ENCODE measurements at regions of chr11 and their contacts with region 1.

Region 1: GRCh38 chr11:120511116-120511819 is at the start of gene GRIK4:
- DNase-seq: peak; percentile 69 to 82 (median 81)
- H3K4me3 ChIP-seq: peak within 1 kb of the TSS in 5 of 7 experiments; percentile 34 to 64 (median 44)
- H3K27ac ChIP-seq: no peak within 1 kb of the TSS
- H3K4me1 ChIP-seq: peaks cover 0 to 2% (median 1%) of the 10 kb centered on the region in 4 experiments
- H3K27me3 ChIP-seq: peaks cover 11 to 77% (median 32%) of the 10 kb centered on the region in 5 experiments

Region 2: GRCh38 chr11:120210626-120211521 is 300.4 kb before region 1 on chr11 and contains the start of gene OAF:
- CTCF ChIA-PET with region 1: no interaction called
- POLR2A ChIA-PET with region 1: no interaction called
- DNase-seq: peak; percentile 85 to 95 (median 94)
- H3K4me3 ChIP-seq: peak within 1 kb of the TSS; percentile 48 to 90 (median 85)
- H3K27ac ChIP-seq: peak within 1 kb of the TSS in 1 of 2 experiments; percentile 58
- H3K4me1 ChIP-seq: peaks cover 4 to 49% (median 37%) of the 10 kb centered on the region in 4 experiments
- H3K27me3 ChIP-seq: no peaks in the 10 kb centered on the region

Region 3: DNA sequence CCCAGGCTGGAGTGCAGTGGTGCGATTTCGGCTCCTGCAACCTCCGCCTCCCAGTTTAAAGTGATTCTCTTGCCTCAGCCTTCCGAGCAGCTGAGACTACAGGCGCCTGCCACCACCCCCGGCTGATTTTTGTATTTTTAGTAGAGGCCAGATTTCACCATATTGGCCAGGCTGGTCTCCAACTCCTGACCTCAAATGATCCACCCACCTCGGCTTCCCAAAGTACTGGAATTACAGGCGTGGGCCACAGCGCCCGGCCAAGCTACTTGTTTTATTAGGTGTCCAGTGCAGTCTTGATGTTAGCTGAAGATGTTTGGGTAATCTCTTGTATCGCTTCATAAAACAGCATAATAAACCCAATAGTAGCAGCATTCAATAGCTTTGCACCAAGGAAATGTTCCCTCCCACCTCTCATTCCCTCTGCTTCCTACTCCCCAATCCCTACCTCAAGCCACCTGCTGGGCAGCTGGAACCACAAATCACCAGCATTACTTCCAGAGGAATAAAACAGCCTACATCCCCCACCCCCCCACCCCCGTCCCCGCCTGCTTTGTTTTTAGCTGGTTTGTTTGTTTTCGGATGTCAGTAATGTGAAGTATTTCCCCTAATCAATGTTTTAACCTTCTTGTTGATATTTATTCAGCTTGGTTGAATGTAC is 10.7 kb before region 1 on chr11:
- CTCF ChIA-PET with region 1: interaction called, 16 read pairs
- POLR2A ChIA-PET with region 1: no interaction called
- DNase-seq: no peak
- H3K4me3 ChIP-seq: no peak overlapping the region
- H3K27ac ChIP-seq: no peak overlapping the region
- H3K4me1 ChIP-seq: no peaks in the 10 kb centered on the region
- H3K27me3 ChIP-seq: peaks cover 11 to 59% (median 18%) of the 10 kb centered on the region in 5 experiments

Region 4: GRCh38 chr11:120682866-120683265 is 171.6 kb after region 1 on chr11:
- CTCF ChIA-PET with region 1: interaction called, 12 read pairs
- POLR2A ChIA-PET with region 1: no interaction called
- DNase-seq: no peak
- H3K4me3 ChIP-seq: no peak overlapping the region
- H3K27ac ChIP-seq: no peak overlapping the region
- H3K4me1 ChIP-seq: no peaks in the 10 kb centered on the region
- H3K27me3 ChIP-seq: peaks cover 0 to 45% (median 11%) of the 10 kb centered on the region in 5 experiments